Activated naive CD4-positive, alpha-beta T cell treated with anti-CD3 and anti-CD28 coated beads for 36 hours (primary cell): ENCODE measurements at regions of chr12 and their contacts with region 1.

Region 1: GRCh38 chr12:19757317-19757877 is 318.1 kb downstream of the AEBP2 start:
- DNase-seq: no peak
- H3K4me3 Mint-ChIP-seq: no peak overlapping the region
- H3K27ac Mint-ChIP-seq: no peak overlapping the region
- H3K4me1 Mint-ChIP-seq: no peaks in the 10 kb centered on the region
- H3K27me3 Mint-ChIP-seq: no peaks in the 10 kb centered on the region

Region 2: GRCh38 chr12:19893514-19893913 is 136.1 kb after region 1 on chr12:
- CTCF ChIA-PET with region 1: no interaction called
- intact Hi-C with region 1: loop called (anchors 10 kb)
- DNase-seq: no peak
- H3K4me3 Mint-ChIP-seq: no peak overlapping the region
- H3K27ac Mint-ChIP-seq: no peak overlapping the region
- H3K4me1 Mint-ChIP-seq: peaks cover 8% of the 10 kb centered on the region
- H3K27me3 Mint-ChIP-seq: peaks cover 2% of the 10 kb centered on the region